ENCODE measurements at regions of chr19 and their contacts with region 1.

Region 1: GRCh38 chr19:47697863-47698609 is 15.2 kb upstream of the EHD2 start:
- DNase-seq: peak; percentile 62 to 90 (median 76)
- ATAC-seq: peak; percentile 95
- H3K4me3 ChIP-seq: no peak overlapping the region
- H3K27ac ChIP-seq: no peak overlapping the region
- H3K4me1 ChIP-seq: peaks cover 0 to 7% of the 10 kb centered on the region in 2 donors
- H3K27me3 ChIP-seq: no peaks in the 10 kb centered on the region
- CTCF ChIP-seq: peak; percentile 91 to 93

Region 2: DNA sequence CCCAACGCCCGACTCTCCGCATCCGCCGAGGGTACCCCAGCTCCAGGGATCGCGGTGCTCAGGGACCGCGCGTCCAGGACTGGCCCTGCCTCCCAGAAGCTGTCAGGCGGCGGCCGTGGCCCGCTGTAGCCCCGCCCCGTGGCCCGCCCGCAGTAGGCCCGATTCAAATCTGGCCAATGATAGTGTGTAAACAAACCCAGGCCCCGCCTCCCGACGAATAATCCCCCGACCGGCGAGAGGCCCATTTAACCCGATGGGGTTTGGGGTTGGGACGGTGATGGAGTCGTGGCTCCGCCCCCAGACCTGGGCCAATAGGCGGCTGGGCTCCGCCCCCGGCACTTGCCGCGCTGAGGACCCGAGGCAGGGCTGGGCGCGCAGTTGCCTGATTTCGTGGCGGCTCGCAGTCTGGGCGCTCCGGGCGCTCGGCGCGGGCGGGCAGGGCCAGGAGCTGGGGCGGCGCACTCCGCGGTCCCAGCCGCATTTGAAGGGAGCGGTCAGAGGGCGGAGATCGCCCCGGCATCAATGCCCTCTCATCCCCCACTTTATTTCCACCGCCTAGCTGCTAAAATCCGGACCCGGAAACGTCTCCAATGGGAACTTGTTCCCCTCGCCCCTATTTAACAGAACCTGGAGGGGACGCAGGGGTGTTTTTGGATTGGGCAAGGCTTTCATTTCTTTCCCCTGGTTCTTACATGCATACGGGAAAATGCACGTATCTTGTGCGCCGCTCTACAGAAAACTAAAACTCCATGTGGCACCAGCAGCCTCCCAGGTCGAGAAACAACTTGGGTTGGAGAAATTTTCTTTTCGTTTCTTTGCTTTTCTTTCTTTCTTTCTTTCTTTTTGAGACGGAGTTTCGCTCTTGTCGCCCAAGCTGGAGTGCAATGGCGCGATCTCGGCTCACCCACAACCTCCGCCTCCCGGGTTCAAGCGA is 97.5 kb before region 1 on chr19:
- intact Hi-C with region 1: loop called in 1 of 2 experiments (anchors 10 kb)
- DNase-seq: peak; percentile 97 to 100 (median 100)
- ATAC-seq: peak; percentile 98
- H3K4me3 ChIP-seq: peak overlapping the region; percentile 38 to 56
- H3K27ac ChIP-seq: peak overlapping the region; percentile 88 to 89
- H3K4me1 ChIP-seq: peaks cover 10 to 40% of the 10 kb centered on the region in 2 donors
- H3K27me3 ChIP-seq: no peaks in the 10 kb centered on the region
- CTCF ChIP-seq: no peak

Region 3: DNA sequence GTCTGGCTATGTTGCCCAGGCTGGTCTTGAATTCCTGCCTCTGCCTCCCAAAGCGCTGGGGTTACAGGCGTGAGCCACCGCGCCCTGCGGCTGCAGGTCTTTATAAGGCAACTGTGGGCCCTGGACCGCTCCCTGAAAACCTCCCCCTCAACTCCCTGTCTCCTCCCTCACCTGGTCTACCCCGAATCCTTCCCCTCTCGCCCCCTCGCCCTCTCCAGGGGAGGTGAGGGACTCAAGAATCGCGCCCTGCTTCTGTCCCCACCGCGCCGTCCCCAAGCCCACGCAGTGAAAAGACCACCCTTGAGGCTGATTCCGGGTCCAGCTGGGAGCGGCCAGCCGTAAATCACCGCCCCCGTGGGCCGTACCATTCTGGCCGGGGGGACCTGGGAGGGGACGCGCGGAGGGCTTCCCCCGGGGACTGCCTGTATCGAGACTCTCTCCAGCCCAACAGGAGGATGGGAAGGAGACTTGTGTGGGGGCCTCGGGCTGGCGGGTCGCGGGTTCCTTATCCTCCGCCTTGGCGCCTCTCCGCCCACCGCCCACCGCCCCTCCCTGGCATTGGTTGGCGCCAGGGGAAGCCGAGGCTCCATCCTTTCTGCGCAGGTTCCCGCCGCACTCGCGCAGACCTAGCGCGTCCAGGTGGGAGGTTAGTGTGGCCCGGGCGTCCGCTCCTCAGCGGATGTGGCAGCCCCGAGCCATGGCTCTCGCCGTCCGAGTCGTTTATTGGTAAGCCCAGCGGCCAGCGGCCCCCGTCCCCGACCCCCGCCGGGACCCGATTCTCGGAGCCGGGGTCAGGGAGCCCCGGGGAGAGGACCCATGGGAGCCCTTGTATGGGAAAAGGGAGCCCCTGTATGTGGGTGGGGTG is 80.3 kb after region 1 on chr19 and contains the start of gene SELENOW:
- intact Hi-C with region 1: no loop called
- DNase-seq: peak; percentile 76 to 92 (median 82)
- ATAC-seq: peak; percentile 90
- H3K4me3 ChIP-seq: peak within 1 kb of the TSS; percentile 74 to 92
- H3K27ac ChIP-seq: peak within 1 kb of the TSS; percentile 94 to 98
- H3K4me1 ChIP-seq: peaks cover 29 to 31% of the 10 kb centered on the region in 2 donors
- H3K27me3 ChIP-seq: no peaks in the 10 kb centered on the region
- CTCF ChIP-seq: no peak
- polyA plus RNA-seq, gene SELENOW: 161 to 238 (median 211) TPM